Activated CD8-positive, alpha-beta T cell treated with anti-CD3 and anti-CD28 coated beads for 36 hours (primary cell): ENCODE measurements at regions of chr5 and their contacts with region 1.

Region 1: DNA sequence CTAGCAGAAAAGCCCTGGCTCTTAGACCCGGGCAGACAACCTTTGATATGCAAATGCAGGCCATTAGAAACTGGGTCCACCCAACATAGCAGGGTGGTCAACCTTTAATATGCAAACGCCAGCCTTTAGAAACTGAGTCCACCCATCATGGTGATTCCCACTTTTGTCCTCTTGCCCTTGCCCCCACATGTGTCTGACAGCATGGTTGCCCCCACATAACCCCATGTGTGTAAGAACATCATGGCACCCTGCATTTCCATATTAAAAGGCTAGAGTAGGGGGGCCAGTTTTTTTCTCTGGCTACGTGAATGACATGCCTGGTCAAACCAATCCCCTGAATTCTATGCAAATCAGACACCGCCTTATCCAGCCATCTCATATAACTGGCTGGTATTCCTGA is 273.2 kb upstream of the PRDM9 start:
- DNase-seq: no peak
- ATAC-seq: no peak
- H3K4me3 Mint-ChIP-seq: no peak overlapping the region
- H3K27ac Mint-ChIP-seq: no peak overlapping the region
- H3K4me1 Mint-ChIP-seq: no peaks in the 10 kb centered on the region
- H3K27me3 Mint-ChIP-seq: no peaks in the 10 kb centered on the region
- CTCF ChIP-seq: no peak

Region 2: GRCh38 chr5:23268136-23268535 is 33.9 kb after region 1 on chr5:
- CTCF ChIA-PET with region 1: no interaction called
- POLR2A ChIA-PET with region 1: no interaction called
- intact Hi-C with region 1: loop called (anchors 2 kb)
- DNase-seq: no peak
- ATAC-seq: no peak
- H3K4me3 Mint-ChIP-seq: no peak overlapping the region
- H3K27ac Mint-ChIP-seq: no peak overlapping the region
- H3K4me1 Mint-ChIP-seq: no peaks in the 10 kb centered on the region
- H3K27me3 Mint-ChIP-seq: no peaks in the 10 kb centered on the region
- CTCF ChIP-seq: no peak